ENCODE measurements at regions of chr5 and their contacts with region 1.

Region 1: GRCh38 chr5:171913987-171914273 is 92.5 kb downstream of the FBXW11 start:
- DNase-seq: no peak
- H3K4me3 ChIP-seq: no peak overlapping the region
- H3K27ac ChIP-seq: no peak overlapping the region
- H3K4me1 ChIP-seq: peaks cover 0 to 3% (median 0%) of the 10 kb centered on the region in 3 donors
- H3K27me3 ChIP-seq: no peaks in the 10 kb centered on the region
- CTCF ChIP-seq: no peak

Region 2: GRCh38 chr5:171418316-171418981 is 495.5 kb before region 1 on chr5:
- intact Hi-C with region 1: loop called (anchors 10 kb)
- DNase-seq: peak; percentile 93 to 95 (median 94)
- H3K4me3 ChIP-seq: peak overlapping the region in 2 of 3 donors; percentile 0 to 44
- H3K27ac ChIP-seq: no peak overlapping the region
- H3K4me1 ChIP-seq: peaks cover 0 to 17% (median 0%) of the 10 kb centered on the region in 3 donors
- H3K27me3 ChIP-seq: peaks cover 2% of the 10 kb centered on the region
- CTCF ChIP-seq: peak; percentile 95

Region 3: GRCh38 chr5:171797543-171797942 is 116.4 kb before region 1 on chr5:
- intact Hi-C with region 1: no loop called
- DNase-seq: no peak
- H3K4me3 ChIP-seq: no peak overlapping the region
- H3K27ac ChIP-seq: no peak overlapping the region
- H3K4me1 ChIP-seq: no peaks in the 10 kb centered on the region
- H3K27me3 ChIP-seq: no peaks in the 10 kb centered on the region
- CTCF ChIP-seq: no peak

Region 4: GRCh38 chr5:172035039-172035438 is 121.1 kb after region 1 on chr5:
- intact Hi-C with region 1: loop called (anchors 10 kb)
- DNase-seq: no peak
- H3K4me3 ChIP-seq: no peak overlapping the region
- H3K27ac ChIP-seq: no peak overlapping the region
- H3K4me1 ChIP-seq: peaks cover 0 to 2% (median 0%) of the 10 kb centered on the region in 3 donors
- H3K27me3 ChIP-seq: no peaks in the 10 kb centered on the region
- CTCF ChIP-seq: no peak

Region 5: DNA sequence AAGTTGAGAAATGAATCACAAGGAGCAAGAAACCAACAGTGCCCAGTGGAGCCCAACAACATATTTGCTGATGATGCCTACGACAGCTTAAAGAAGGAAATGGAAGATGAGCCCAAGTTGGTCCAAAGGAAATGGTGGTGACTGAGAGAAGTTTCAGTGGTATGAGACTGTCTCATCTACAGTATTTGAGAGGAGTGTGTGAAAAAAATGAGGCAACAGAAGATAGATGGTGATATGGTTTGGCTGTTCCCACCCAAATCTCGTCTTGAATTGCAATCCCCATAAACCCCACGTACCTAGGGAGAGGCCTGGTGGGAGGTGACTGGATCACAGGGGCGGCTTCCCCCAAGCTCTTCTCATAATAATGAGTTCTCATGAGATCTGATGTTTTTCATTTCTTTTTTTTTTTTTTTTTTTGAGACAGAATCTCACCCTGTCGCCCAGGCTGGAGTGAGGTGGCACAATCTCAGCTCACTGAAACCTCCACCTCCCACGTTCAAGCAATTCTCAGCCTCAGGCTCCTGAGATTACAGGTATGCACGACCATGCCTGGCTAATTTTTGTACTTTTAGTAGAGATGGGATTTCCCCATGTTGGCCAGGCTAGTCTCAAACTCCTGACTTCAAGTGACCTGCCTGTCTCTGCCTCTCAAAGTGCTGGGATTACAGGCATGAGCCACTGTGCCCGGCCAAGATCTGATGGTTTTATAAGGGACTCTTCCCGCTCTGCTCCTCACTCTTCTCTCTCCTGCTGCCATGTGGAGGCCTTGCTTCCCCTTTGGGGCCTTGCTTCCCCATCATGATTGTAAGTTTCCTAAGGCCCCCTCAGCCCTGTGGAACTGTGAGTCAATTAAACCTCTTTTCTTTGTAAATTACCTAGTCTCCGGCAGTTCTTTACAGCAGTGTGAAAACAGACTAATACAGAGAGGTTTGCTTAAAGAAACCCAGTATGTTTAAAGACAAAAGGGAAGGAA is 310.3 kb after region 1 on chr5:
- intact Hi-C with region 1: no loop called
- DNase-seq: no peak
- H3K4me3 ChIP-seq: no peak overlapping the region
- H3K27ac ChIP-seq: no peak overlapping the region
- H3K4me1 ChIP-seq: no peaks in the 10 kb centered on the region
- H3K27me3 ChIP-seq: no peaks in the 10 kb centered on the region
- CTCF ChIP-seq: no peak